Activated naive CD4-positive, alpha-beta T cell treated with anti-CD3 and anti-CD28 coated beads for 36 hours (primary cell): ENCODE measurements at regions of chr4 and their contacts with region 1.

Region 1: GRCh38 chr4:3193531-3194203 is 55.3 kb upstream of the MSANTD1 start:
- DNase-seq: no peak
- H3K4me3 Mint-ChIP-seq: no peak overlapping the region
- H3K27ac Mint-ChIP-seq: no peak overlapping the region
- H3K4me1 Mint-ChIP-seq: peaks cover 49% of the 10 kb centered on the region
- H3K27me3 Mint-ChIP-seq: no peaks in the 10 kb centered on the region

Region 2: DNA sequence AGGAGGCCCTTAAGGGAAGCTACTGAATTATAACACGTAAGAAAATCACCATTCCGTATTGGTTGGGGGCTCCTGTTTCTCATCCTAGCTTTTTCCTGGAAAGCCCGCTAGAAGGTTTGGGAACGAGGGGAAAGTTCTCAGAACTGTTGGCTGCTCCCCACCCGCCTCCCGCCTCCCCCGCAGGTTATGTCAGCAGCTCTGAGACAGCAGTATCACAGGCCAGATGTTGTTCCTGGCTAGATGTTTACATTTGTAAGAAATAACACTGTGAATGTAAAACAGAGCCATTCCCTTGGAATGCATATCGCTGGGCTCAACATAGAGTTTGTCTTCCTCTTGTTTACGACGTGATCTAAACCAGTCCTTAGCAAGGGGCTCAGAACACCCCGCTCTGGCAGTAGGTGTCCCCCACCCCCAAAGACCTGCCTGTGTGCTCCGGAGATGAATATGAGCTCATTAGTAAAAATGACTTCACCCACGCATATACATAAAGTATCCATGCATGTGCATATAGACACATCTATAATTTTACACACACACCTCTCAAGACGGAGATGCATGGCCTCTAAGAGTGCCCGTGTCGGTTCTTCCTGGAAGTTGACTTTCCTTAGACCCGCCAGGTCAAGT is 48.3 kb after region 1 on chr4:
- CTCF ChIA-PET with region 1: no interaction called
- intact Hi-C with region 1: loop called (anchors 5 kb)
- DNase-seq: no peak
- H3K4me3 Mint-ChIP-seq: no peak overlapping the region
- H3K27ac Mint-ChIP-seq: no peak overlapping the region
- H3K4me1 Mint-ChIP-seq: peaks cover 12% of the 10 kb centered on the region
- H3K27me3 Mint-ChIP-seq: no peaks in the 10 kb centered on the region

Region 3: DNA sequence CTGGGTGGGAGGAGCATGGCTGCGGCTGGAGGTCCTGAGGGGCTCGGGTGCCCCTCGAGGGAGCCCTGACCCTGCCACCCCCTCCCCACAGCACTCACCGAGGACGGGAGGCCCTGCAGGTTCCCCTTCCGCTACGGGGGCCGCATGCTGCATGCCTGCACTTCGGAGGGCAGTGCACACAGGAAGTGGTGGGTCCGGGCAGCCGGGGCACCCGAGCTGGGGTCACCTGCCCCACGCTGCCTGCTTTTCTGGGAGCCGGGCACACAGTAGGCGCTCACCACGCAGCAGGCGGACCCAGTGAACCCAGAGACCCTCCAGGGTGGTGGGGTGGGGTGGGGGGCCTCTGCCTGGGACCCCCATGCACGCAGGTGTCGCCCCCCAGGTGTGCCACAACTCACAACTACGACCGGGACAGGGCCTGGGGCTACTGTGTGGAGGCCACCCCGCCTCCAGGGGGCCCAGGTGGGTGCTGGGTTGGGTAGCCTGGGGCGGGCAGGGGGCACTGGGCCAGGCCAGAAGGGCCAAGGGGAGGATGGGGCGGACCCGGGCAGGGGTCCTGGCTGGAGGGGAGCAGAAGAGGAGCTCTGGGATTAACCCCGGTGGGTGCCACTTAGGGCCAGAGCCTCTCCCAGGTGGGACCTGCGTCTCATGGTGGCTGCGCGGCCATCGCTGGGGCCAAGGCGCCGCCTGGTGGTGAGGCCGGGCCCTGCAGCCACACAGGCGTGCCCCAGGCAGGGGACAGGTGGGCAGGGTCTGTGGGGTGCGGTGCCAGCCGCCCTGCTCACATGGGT is 249.5 kb after region 1 on chr4:
- CTCF ChIA-PET with region 1: interaction called, 4 read pairs
- intact Hi-C with region 1: loop called (anchors 1 kb)
- DNase-seq: peak; percentile 71
- H3K4me3 Mint-ChIP-seq: no peak overlapping the region
- H3K27ac Mint-ChIP-seq: no peak overlapping the region
- H3K4me1 Mint-ChIP-seq: no peaks in the 10 kb centered on the region
- H3K27me3 Mint-ChIP-seq: no peaks in the 10 kb centered on the region